Transverse colon (tissue), 4 donors: ENCODE measurements at regions of chr4 and their contacts with region 1.

Region 1: DNA sequence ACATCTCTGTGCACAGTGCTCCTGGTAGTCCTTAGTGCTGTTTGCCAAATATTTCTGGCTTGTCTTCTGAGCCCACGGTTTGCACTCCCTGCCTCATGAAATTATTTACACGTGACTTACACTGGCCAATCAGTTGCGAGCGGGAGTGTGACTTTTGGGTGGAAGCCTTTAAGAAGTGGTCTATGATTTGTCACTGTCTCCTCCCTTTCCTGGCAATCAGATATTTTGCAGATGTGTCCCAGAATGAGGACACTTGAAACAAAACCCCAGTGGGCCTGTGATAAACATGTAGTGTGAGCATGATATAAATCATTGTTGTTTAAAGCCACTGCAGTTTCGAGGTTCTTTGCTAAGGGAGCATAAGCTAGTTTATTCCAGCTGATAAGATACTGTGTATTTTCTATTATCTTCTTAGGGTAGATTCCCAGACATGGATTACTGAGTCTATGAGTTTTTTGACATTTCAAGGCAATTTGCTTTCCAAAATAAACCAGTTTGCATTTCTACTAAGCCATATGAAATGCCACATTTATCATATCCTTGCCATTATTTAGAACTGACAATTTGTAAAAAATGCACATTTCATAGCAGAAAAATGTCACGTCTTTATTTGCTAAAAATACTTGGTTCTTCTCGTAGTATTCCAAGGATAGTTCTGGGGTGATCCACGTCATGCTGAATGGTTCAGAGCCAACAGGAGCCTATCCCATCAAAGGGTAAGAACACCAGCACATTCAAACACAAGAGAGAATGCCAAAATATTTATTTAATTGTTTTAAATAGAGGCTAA is 12.0 kb downstream of the BST1 start:
- DNase-seq: no peak
- H3K4me3 ChIP-seq: no peak overlapping the region
- H3K27ac ChIP-seq: no peak overlapping the region
- H3K4me1 ChIP-seq: peaks cover 0 to 14% (median 7%) of the 10 kb centered on the region in 4 donors
- H3K27me3 ChIP-seq: no peaks in the 10 kb centered on the region
- CTCF ChIP-seq: no peak
- EP300 ChIP-seq: no peak
- POLR2A ChIP-seq: no peak

Region 2: GRCh38 chr4:16977081-16977480 is 1262.2 kb after region 1 on chr4:
- in situ Hi-C with region 1: no loop called
- intact Hi-C with region 1: loop called (anchors 5 kb)
- DNase-seq: no peak
- H3K4me3 ChIP-seq: no peak overlapping the region
- H3K27ac ChIP-seq: no peak overlapping the region
- H3K4me1 ChIP-seq: no peaks in the 10 kb centered on the region
- H3K27me3 ChIP-seq: no peaks in the 10 kb centered on the region
- CTCF ChIP-seq: no peak
- EP300 ChIP-seq: no peak
- POLR2A ChIP-seq: no peak